Calu3 (cell line): ENCODE measurements at regions of chr12 and their contacts with region 1.

Region 1: DNA sequence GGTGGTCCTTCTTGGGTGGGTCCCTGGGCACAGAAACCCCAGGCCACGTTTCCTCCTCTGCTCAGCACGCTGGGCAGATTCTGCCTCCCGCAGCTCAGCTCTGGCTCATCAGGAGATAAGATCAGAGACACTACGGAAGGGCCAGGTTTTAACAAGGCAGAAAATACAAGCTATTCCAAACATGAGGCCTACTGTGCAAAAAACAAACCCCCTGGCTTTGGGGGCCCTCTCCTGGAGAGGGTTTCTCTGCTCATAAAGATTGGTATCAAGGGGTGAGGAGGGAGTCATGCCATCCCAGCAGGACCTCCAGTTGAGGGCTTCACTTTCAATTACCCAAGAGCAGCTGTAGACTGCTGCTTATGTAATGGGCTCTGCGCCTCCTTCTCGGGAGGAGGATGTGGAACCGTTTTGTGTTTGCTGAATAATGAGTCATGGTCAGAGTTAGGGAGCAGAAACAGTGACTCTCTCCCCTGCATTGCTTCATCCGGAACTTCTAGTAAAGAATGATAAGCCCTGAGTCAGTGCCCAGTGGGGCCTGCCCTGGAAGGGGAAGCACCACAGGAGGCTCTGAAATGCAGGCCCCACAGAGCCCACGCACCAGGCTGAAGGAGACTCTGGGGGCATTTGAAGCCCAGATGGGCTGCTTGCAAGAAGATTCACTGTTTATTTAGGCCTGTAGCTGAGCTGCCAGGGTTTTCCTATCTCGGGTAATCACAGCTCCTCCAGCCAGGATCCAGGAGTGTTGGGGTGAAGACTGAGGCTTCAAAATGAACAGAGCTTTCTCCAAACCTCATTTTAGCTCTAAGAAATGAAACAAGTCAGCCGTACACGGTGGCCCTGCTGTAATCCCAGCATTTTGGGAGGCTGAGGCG is 79.3 kb downstream of the SSPN start:
- DNase-seq: peak; percentile 84
- H3K4me3 Mint-ChIP-seq: peak overlapping the region; percentile 28
- H3K27ac Mint-ChIP-seq: peak overlapping the region; percentile 96
- H3K4me1 Mint-ChIP-seq: peaks cover 51% of the 10 kb centered on the region
- H3K27me3 Mint-ChIP-seq: no peaks in the 10 kb centered on the region
- CTCF ChIP-seq: no peak

Region 2: GRCh38 chr12:26239122-26239851 is 35.4 kb before region 1 on chr12:
- CTCF ChIA-PET with region 1: interaction called, 21 read pairs
- intact Hi-C with region 1: loop called (anchors 1 kb)
- DNase-seq: peak; percentile 92
- H3K4me3 Mint-ChIP-seq: peak overlapping the region; percentile 24
- H3K27ac Mint-ChIP-seq: peak overlapping the region; percentile 92
- H3K4me1 Mint-ChIP-seq: peaks cover 59% of the 10 kb centered on the region
- H3K27me3 Mint-ChIP-seq: no peaks in the 10 kb centered on the region
- CTCF ChIP-seq: no peak